ENCODE measurements at regions of chr15 and their contacts with region 1.

Region 1: GRCh38 chr15:59484399-59484798 is 46.4 kb downstream of the FAM81A start:
- DNase-seq: peak in 3 of 5 donors; percentile 15 to 36 (median 20)
- ATAC-seq: peak; percentile 80 to 96 (median 90)
- H3K4me3 ChIP-seq: no peak overlapping the region
- H3K27ac ChIP-seq: no peak overlapping the region
- H3K4me1 ChIP-seq: peaks cover 0 to 8% (median 0%) of the 10 kb centered on the region in 12 donors
- H3K27me3 ChIP-seq: no peaks in the 10 kb centered on the region
- CTCF ChIP-seq: no peak
- POLR2A ChIP-seq: no peak

Region 2: GRCh38 chr15:59388670-59389069 is 95.7 kb before region 1 on chr15:
- intact Hi-C with region 1: loop called in 1 of 10 experiments (anchors 10 kb)
- DNase-seq: no peak
- ATAC-seq: peak in 1 of 4 donors; percentile 12
- H3K4me3 ChIP-seq: no peak overlapping the region
- H3K27ac ChIP-seq: no peak overlapping the region
- H3K4me1 ChIP-seq: peaks cover 0 to 5% (median 0%) of the 10 kb centered on the region in 12 donors
- H3K27me3 ChIP-seq: no peaks in the 10 kb centered on the region
- CTCF ChIP-seq: no peak
- POLR2A ChIP-seq: no peak

Region 3: GRCh38 chr15:59437817-59438562 is 46.4 kb before region 1 on chr15 and contains the start of gene FAM81A:
- intact Hi-C with region 1: loop called in 1 of 10 experiments (anchors 10 kb)
- DNase-seq: peak; percentile 91 to 94 (median 91)
- ATAC-seq: peak; percentile 97 to 99 (median 99)
- H3K4me3 ChIP-seq: peak within 1 kb of the TSS; percentile 50 to 86 (median 60)
- H3K27ac ChIP-seq: peak within 1 kb of the TSS in 8 of 12 donors; percentile 24 to 53 (median 37)
- H3K4me1 ChIP-seq: peaks cover 0 to 21% (median 14%) of the 10 kb centered on the region in 12 donors
- H3K27me3 ChIP-seq: peaks cover 0 to 17% (median 0%) of the 10 kb centered on the region in 9 donors
- CTCF ChIP-seq: no peak
- POLR2A ChIP-seq: no peak
- total RNA-seq, gene FAM81A: 1.1 to 4.5 (median 3.2) TPM